ENCODE measurements at regions of chr19 and their contacts with region 1.

Region 1: DNA sequence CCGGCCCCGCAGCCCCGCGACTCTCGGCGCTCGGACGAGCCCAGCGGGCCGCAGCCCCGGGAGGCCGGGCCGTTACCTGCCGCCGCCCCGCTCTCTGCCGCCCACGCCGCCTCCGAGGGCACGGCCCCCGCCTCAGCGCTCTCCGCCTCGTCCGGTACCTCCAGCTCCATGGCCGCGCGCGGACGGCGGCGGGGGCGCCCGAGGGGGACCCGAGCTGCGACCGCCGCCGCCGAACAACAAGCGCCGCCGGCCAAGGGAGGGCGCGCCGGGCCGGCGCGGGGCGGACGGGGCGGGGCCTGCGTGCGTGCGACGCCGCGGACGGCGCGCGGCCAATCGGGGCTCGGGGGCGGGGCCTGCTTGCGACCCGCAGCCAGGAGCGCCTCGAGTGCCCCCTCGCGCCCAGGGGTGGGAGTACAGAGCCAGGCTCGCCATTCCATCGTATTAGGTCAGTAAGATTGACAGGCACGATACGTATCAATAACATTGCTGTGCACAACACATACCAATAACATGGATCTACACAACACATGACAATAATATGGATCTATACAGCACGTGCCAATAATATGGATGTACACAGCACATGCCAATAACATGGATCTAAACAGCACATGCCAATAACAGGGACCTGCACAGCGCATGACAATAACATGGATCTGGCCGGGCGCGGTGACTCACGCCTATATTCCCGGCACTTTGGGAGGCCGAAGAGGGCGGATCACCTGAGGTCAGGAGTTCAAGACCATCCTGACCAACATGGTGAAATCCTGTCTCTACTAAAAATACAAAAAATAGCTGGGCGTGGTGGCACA is at the start of gene PIP5K1C:
- DNase-seq: peak; percentile 94
- H3K4me3 Mint-ChIP-seq: peak within 1 kb of the TSS; percentile 90
- H3K27ac Mint-ChIP-seq: peak within 1 kb of the TSS; percentile 56
- H3K4me1 Mint-ChIP-seq: peaks cover 18% of the 10 kb centered on the region
- H3K27me3 Mint-ChIP-seq: peaks cover 2% of the 10 kb centered on the region
- total RNA-seq, gene PIP5K1C: 14.7 to 15.7 TPM

Region 2: DNA sequence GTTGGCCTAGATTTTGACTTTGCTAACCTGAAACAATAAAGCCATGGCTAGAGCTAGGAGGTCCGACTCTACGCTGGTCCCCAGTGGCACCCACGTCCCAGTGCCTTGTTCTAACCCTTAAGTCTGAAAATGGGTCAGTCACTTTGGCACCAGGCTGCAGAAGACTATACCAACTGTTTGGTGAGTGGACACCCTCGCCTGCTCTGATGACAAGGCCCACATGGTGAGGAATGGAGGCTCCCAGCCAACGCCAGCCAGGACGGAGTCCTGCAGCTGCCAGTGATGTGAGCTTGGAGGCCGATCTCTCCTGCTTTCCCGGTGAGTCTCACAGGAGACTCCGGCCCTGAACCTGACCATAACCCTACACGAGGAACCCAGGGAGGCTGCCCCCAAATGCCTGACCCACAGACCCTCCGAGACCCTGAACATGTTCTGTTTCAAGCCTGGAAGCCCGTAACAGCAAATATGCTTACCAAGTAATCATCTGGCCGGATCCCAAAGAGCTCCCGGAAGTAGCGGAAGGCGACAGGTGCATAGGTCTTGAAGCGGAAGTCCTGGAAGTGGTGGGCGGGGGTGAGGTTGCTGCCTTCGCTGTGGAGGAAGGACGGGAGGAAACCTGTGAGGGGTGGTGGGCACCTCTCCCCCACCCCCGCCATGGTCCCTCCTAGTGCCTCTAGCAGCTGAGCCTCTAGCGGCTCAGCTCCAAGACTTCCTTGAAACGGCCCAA is 39.8 kb before region 1 on chr19:
- CTCF ChIA-PET with region 1: interaction called, 14 read pairs
- POLR2A ChIA-PET with region 1: no interaction called
- intact Hi-C with region 1: no loop called
- DNase-seq: no peak
- H3K4me3 Mint-ChIP-seq: no peak overlapping the region
- H3K27ac Mint-ChIP-seq: no peak overlapping the region
- H3K4me1 Mint-ChIP-seq: no peaks in the 10 kb centered on the region
- H3K27me3 Mint-ChIP-seq: no peaks in the 10 kb centered on the region

Region 3: DNA sequence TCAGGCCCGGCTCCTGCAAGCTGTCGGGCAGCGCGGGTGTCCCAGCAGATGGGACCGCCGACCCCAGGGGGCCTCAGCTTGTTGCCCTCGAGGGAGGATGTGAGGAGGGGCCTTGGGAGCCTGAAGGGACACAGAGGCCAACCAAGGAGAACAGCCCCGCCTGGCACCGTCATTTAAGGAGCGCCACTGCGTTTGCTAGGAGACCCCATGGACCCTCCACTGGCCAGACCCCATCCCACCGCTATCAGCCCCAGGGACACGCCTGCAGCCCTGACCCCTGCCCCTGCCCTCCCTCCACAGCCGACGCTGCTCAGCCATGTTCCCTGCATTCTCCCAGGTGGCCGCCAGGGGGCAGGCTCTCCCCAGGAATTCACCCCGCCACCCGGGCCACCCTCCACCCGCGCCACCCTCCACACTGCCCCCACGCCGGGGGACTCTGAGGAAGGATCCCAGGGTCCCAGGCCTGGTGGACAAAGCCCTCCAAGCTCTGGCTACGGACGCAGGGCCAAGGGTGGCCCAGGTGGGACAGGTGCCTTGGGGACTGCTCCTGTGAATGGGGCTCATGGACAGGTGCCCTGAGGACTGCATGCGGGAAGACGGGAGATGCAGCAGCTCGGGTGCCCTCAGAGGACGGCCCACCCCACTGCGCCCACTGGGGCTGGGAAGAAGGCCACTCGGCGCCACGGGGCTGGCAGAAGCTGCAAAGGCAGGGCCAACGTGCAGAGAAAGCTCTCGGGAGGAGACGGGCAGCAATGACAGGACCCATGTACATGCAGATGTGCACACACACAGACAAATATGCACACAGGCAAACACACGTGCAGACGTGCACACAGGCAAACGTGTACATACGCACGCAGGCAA is 34.5 kb before region 1 on chr19:
- CTCF ChIA-PET with region 1: interaction called, 14 read pairs
- POLR2A ChIA-PET with region 1: no interaction called
- intact Hi-C with region 1: loop called (anchors 1 kb)
- DNase-seq: peak; percentile 82
- H3K4me3 Mint-ChIP-seq: no peak overlapping the region
- H3K27ac Mint-ChIP-seq: no peak overlapping the region
- H3K4me1 Mint-ChIP-seq: peaks cover 5% of the 10 kb centered on the region
- H3K27me3 Mint-ChIP-seq: no peaks in the 10 kb centered on the region

Measured in activated CD4-positive, alpha-beta memory T cell treated with anti-CD3 and anti-CD28 coated beads for 36 hours (primary cell).